ENCODE measurements at regions of chr15 and their contacts with region 1.

Region 1: GRCh38 chr15:35697549-35698299 is 151.8 kb upstream of the DPH6 start:
- DNase-seq: no peak
- ATAC-seq: peak; percentile 50
- H3K4me3 ChIP-seq: no peak overlapping the region
- H3K27ac ChIP-seq: peak overlapping the region; percentile 36 to 54
- H3K4me1 ChIP-seq: peaks cover 3 to 4% of the 10 kb centered on the region in 2 donors
- H3K27me3 ChIP-seq: no peaks in the 10 kb centered on the region

Region 2: DNA sequence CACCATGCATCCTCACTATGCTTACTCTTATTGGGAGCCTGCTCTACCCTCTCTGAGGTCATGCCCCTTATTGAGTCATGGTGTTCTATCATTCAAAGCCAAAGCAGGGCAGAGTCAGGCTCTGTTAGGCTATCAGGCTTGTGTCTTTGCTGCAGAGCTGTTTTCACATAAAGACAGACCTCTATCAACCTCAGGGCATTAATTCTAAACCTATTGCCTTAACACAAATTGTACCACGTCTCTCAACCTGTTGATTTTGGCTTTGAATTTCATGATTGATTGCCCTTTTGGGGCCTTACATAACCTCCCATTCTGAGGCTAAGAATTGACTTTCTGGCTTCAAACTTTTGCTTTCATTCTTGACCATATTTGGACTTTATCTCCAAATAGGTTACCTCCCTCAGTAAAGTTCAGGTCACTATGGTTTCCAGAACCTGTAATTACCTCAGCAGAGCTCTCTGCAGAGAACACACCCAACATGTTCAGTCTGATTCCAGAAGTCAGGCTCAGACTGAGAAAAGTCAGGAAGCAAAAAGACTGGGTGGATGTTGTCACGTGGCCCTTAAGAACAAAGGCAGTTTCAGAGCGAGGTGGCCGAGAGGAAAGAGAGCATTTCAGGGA is 391.3 kb before region 1 on chr15:
- intact Hi-C with region 1: loop called in 1 of 2 experiments (anchors 10 kb)
- DNase-seq: no peak
- ATAC-seq: peak; percentile 72
- H3K4me3 ChIP-seq: no peak overlapping the region
- H3K27ac ChIP-seq: peak overlapping the region; percentile 93 to 96
- H3K4me1 ChIP-seq: peaks cover 2 to 4% of the 10 kb centered on the region in 2 donors
- H3K27me3 ChIP-seq: no peaks in the 10 kb centered on the region

Region 3: DNA sequence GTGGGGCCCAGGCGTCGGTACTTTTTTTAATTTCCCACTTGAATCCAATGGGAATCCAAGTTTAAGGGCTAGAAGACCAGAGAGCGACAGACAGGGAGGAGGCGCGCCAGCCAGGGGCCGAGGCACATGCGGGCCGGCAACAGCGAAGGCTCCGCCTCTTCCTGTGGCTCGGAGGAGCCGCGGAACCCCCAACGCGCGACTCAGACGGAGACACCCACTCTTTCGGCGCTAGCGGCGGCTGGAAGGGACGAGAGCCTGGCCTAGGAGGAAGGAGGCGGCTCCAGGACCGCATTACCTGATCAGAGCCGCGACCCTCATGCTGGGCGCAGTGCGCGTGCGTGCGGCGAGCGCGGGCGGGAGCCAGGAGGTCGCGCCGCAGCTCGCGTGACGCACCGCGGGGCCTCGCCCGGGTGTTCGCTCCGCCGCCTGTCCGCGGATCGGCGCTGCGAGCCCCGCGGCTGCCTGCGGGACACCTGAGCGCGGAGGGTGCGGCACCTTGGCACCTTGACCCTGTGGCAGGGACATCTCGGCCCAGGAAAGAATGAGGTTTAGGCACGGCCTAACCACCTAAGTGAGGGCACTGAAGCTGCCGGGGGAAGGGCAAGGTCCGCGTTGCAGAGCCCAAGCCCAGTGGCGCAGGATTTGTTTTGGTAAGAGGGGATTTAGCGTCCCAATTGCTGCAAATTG is 151.8 kb before region 1 on chr15 and contains the start of gene DPH6:
- intact Hi-C with region 1: loop called (anchors 5 to 10 kb)
- DNase-seq: peak; percentile 89 to 93
- ATAC-seq: peak; percentile 96
- H3K4me3 ChIP-seq: peak within 1 kb of the TSS; percentile 40 to 90
- H3K27ac ChIP-seq: peak within 1 kb of the TSS; percentile 69 to 96
- H3K4me1 ChIP-seq: no peaks in the 10 kb centered on the region
- H3K27me3 ChIP-seq: no peaks in the 10 kb centered on the region
- total RNA-seq, gene DPH6: 19.7 to 21.0 TPM

Region 4: GRCh38 chr15:35603301-35603700 is 94.4 kb before region 1 on chr15:
- intact Hi-C with region 1: loop called in 1 of 2 experiments (anchors 10 kb)
- DNase-seq: no peak
- ATAC-seq: no peak
- H3K4me3 ChIP-seq: no peak overlapping the region
- H3K27ac ChIP-seq: no peak overlapping the region
- H3K4me1 ChIP-seq: peaks cover 0 to 2% of the 10 kb centered on the region in 2 donors
- H3K27me3 ChIP-seq: no peaks in the 10 kb centered on the region

Region 5: GRCh38 chr15:36579792-36580431 is 882.2 kb after region 1 on chr15:
- intact Hi-C with region 1: loop called in 1 of 2 experiments (anchors 10 kb)
- DNase-seq: no peak
- ATAC-seq: peak; percentile 75
- H3K4me3 ChIP-seq: peak overlapping the region; percentile 46 to 70
- H3K27ac ChIP-seq: peak overlapping the region in 1 of 2 donors; percentile 1
- H3K4me1 ChIP-seq: no peaks in the 10 kb centered on the region
- H3K27me3 ChIP-seq: no peaks in the 10 kb centered on the region

Measured in aorta (tissue), 5 donors.